Sciatic nerve (tissue), 2 donors: ENCODE measurements at regions of chr3 and their contacts with region 1.

Region 1: DNA sequence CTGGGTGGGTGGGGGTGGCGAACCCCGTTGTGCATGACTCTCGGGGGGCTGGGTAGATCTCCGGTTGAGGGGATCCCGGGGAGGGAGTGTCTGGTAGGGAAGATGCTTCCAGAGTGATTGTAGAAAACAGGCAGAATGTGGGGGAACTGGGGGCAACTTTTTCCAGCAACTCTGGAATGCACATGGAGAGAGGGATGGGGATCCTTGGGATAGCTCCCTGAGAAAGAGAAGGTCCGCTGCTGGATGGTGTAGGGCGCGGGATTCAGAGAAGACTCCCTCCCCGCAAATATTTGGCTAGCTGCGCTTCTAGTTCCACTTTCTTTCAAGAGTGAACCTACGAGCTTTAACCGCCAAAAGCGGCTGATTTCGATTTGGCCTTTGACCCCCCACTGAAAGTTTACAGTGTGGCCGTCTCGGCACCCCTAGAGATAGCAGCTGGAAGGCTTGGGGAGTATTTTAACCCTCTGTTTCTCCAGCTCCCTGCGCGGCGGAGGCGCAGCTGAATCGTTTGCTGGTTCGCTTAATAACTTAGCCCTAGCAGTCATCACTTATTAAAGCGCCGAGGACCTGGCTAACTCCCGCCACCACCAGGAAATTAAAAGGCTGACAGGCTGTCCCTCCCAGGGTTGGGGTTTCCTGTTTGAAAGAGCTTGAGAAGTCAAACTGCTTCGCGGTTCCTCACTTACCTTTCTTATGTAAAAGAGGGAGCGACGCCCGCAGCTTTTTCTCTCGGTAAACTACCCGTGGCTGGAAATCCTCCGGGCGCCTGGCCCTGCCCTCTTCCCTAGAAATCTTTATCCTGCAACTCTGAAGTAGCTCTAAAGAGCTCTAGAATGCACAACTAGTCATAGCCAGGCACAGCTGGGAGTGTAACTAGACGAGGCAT is 1.2 kb downstream of the PHLDB2 start:
- DNase-seq: peak; percentile 85
- ATAC-seq: peak; percentile 89

Region 2: DNA sequence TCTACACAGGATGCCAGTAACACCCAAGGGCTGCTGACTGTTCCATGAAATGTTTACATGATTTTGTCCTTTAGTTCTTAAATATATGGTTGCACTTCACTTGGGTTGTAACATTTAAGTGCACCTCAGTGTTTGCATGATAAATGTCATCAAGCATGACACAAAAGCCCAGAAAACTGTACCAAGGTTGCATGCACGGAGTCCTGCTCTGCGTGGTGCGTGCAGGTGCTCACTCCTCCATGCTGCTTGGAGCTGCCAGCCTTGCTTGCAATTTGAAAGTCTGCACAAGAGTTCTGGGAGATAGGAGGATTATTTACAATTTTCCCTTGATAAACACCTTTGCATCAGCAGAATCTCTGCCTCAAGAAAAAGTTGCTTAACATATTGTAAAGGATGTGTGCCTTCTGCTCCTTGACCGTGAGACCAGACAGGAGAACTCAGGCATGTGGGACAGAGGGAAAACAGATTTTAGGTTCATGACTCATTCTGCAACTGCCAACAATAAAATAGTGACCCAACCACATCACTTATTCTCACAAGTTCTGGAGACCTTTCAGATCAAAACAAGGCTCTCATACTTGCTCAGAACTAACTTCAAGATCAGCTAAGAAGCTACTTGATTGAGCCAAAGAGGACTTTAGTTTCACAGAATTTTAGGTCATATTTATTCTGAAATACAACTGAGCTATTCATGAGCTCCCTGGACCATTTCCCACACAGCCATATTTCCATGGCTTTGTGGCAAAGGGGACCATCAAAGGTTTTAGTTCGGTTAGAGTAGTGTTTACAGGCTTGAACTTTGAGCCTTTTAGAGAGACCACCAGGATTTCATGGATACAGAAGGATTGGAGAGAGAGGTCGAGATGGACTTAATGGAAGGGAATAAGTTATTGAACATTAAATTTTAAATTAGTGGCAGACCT is 136.7 kb before region 1 on chr3:
- intact Hi-C with region 1: loop called (anchors 10 kb)
- DNase-seq: no peak
- ATAC-seq: peak; percentile 51

Region 3: DNA sequence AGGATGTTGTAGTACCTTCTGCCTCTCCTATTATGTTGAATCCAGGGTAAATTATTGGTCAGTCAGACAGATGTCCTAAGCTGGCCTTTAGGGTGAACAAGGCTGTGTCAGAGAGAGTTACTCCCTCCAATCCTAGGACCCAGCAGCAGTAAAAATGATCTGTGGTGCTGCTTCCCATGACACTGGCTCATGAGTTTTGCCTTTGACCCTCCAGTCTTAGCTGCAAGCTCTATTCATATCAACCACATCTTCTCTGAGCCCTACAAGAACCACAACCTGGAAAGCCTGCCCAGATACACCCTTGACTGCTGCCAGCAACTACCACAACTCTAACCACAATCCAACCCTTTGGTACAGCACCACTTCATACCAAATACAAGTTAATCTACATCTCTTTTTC is 28.4 kb before region 1 on chr3:
- intact Hi-C with region 1: no loop called
- DNase-seq: no peak
- ATAC-seq: peak; percentile 68

Region 4: GRCh38 chr3:111967651-111968274 is 107.5 kb after region 1 on chr3:
- intact Hi-C with region 1: loop called (anchors 10 kb)
- DNase-seq: peak; percentile 93
- ATAC-seq: peak; percentile 90